ENCODE measurements at regions of chr12 and their contacts with region 1.

Region 1: DNA sequence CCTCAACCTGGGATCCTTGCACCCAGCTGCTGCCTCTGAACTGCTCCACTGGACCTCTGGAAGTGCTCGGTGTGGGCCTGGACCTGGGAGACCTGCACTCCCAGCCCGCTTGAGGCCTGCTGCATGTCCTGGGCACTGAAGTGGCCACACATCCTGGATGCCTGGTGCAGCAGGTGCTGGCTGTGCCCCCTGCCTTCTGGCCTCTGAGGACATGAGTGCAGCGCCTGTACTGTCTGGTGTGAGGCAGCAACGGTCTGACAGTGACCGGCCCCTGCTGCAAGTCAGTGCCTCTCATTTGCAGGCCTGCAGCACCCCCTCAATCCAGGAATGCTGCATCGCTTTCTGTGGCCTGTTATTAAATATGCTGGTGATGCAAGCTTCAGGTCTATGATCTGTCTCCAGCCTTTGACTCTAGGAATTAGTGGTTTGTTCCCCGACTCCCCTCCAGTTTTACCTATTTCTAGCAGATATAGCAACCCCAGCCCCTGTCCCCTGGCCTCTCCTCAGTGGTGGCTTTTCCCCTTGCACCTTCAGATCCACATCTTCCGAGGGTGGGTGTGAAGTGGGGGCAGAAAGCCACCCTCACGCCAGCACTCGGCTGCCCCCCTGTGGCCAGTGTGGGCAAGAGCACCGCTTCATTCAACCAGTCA is 3.6 kb downstream of the SMIM41 start:
- DNase-seq: peak; percentile 81
- ATAC-seq: peak; percentile 83
- H3K4me3 Mint-ChIP-seq: no peak overlapping the region
- H3K27ac Mint-ChIP-seq: no peak overlapping the region
- H3K4me1 Mint-ChIP-seq: peaks cover 8% of the 10 kb centered on the region
- H3K27me3 Mint-ChIP-seq: peaks cover 7% of the 10 kb centered on the region

Region 2: DNA sequence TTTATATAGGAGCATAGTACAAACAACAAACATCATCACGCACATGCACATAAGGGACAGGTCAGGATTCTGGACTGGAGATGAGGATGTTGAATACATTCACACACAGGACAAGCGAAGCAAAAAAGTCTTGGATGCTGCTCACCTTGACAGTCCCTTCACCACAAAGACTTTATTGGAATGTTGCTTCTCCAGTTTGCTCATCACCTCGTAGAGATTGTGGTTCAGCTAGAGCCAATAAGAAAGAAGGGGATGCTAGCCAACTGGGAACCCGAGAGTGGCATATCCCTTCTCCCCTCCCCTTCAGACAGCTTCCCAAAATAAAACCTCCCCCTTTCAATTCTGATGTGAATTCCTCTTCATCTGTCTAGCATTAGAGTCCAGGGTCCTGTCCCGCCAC is 787.5 kb before region 1 on chr12:
- CTCF ChIA-PET with region 1: no interaction called
- POLR2A ChIA-PET with region 1: no interaction called
- intact Hi-C with region 1: no loop called
- DNase-seq: no peak
- ATAC-seq: no peak
- H3K4me3 Mint-ChIP-seq: no peak overlapping the region
- H3K27ac Mint-ChIP-seq: no peak overlapping the region
- H3K4me1 Mint-ChIP-seq: peaks cover 21% of the 10 kb centered on the region
- H3K27me3 Mint-ChIP-seq: no peaks in the 10 kb centered on the region

Region 3: DNA sequence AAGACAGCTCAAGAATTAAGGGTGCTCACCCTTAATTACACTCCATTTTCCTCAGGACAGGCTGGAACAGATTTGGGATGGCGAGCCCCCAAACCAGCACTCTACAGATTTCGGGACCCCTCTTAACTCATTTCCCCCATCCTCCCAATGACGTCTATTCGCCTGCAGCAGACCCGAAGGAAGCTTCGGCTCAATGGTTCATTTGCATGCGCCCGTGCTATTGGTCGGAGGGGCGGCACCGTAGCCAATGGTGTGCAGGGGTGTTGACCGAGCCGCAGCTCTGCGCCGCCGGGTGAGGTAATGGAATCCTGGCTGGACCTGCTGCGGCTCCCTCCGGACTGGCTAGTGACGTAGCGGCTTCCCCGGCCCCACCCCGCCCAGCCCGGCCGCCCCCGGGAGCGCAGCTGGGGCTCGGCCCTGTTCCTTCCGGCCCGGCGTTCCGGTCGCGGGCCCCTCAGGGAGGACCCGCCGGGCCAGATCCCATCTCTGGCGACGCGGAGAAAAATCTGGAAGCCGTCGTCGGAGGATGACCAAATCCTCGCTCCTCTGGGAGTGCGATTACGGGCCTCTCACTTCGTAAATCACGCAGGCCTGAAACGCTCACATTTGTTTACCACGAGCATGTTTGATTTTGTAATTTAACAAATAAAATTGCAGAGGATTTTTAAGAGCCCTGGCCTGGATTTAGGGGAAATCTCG is 50.2 kb before region 1 on chr12:
- CTCF ChIA-PET with region 1: interaction called, 69 read pairs
- POLR2A ChIA-PET with region 1: no interaction called
- intact Hi-C with region 1: no loop called
- DNase-seq: peak; percentile 95
- ATAC-seq: peak; percentile 98
- H3K4me3 Mint-ChIP-seq: peak overlapping the region; percentile 70
- H3K27ac Mint-ChIP-seq: peak overlapping the region; percentile 84
- H3K4me1 Mint-ChIP-seq: peaks cover 42% of the 10 kb centered on the region
- H3K27me3 Mint-ChIP-seq: no peaks in the 10 kb centered on the region

Region 4: GRCh38 chr12:52038447-52038846 is 44.7 kb before region 1 on chr12:
- CTCF ChIA-PET with region 1: interaction called, 10 read pairs
- POLR2A ChIA-PET with region 1: no interaction called
- intact Hi-C with region 1: no loop called
- DNase-seq: no peak
- ATAC-seq: peak; percentile 34
- H3K4me3 Mint-ChIP-seq: peak overlapping the region; percentile 75
- H3K27ac Mint-ChIP-seq: peak overlapping the region; percentile 24
- H3K4me1 Mint-ChIP-seq: peaks cover 70% of the 10 kb centered on the region
- H3K27me3 Mint-ChIP-seq: no peaks in the 10 kb centered on the region

Region 5: GRCh38 chr12:52139552-52140062 is 56.5 kb after region 1 on chr12:
- CTCF ChIA-PET with region 1: no interaction called
- POLR2A ChIA-PET with region 1: no interaction called
- intact Hi-C with region 1: no loop called
- DNase-seq: peak; percentile 70
- ATAC-seq: peak; percentile 96
- H3K4me3 Mint-ChIP-seq: no peak overlapping the region
- H3K27ac Mint-ChIP-seq: no peak overlapping the region
- H3K4me1 Mint-ChIP-seq: no peaks in the 10 kb centered on the region
- H3K27me3 Mint-ChIP-seq: peaks cover 2% of the 10 kb centered on the region

Region 6: GRCh38 chr12:52192173-52192791 is 109.2 kb after region 1 on chr12:
- CTCF ChIA-PET with region 1: no interaction called
- POLR2A ChIA-PET with region 1: no interaction called
- intact Hi-C with region 1: no loop called
- DNase-seq: peak; percentile 68
- ATAC-seq: peak; percentile 83
- H3K4me3 Mint-ChIP-seq: no peak overlapping the region
- H3K27ac Mint-ChIP-seq: no peak overlapping the region
- H3K4me1 Mint-ChIP-seq: peaks cover 2% of the 10 kb centered on the region
- H3K27me3 Mint-ChIP-seq: peaks cover 2% of the 10 kb centered on the region